Left cardiac atrium (tissue), 4 donors: ENCODE measurements at regions of chr1 and their contacts with region 1.

Region 1: DNA sequence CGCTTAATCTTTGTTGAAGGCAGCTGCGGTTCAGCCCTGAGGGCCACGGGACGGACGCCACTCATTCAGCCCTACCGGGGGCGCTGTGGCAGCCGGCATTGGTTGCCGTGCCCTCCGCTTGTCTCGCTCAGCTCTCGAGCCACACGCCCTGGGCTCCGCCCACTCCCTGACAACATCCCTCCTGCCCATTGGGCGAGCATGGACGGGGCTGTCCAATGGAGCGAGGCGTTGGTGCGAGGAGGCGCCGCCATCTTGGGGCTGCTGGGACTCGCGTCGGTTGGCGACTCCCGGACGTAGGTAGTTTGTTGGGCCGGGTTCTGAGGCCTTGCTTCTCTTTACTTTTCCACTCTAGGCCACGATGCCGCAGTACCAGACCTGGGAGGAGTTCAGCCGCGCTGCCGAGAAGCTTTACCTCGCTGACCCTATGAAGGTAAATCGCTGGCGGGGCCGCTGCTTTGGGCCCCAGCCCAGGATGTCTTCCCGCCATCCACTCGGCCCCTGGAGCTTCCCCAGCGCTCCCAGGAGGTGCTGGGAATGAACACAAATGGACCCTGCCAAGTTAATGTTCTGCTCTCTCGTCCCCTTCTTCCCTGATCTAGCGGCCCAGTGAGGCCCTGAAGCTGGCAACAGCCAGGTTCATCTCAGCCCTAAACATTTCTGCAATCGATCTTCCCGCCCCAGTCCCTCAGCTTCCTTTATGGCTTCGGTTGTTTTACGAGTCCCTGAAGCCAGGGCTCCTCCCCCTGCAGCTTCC is at the start of gene SRP9:
- DNase-seq: peak; percentile 99
- ATAC-seq: peak; percentile 100
- total RNA-seq, gene SRP9: 189 to 200 TPM

Region 2: DNA sequence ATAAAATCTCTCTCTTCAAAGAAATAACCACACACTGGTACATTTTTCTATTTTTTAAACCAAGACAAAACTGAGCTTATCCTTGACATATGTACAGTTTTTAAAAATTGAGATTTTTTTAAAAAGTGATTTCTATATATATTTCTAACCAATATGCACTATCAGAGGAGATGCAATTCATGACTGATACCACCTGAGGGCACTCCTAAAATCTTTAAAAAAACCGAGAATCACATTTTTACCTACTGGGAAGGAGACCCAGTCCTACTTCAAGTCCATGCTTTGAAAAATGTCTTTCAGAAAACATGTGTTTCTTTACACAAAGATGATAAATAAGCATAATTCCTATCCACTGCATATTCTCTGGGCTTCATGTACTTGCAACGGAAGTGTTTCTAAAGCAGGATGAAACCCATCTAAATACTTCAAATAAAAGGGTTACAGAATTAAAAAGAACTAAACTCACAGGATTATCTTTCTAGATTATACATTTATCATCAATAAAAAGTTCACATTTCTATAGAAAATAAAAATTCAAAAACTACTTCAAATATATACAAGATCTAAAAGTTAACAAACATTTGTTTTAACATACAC is 223.4 kb before region 1 on chr1:
- intact Hi-C with region 1: loop called (anchors 5 to 10 kb)
- DNase-seq: no peak
- ATAC-seq: peak; percentile 44 to 47

Region 3: DNA sequence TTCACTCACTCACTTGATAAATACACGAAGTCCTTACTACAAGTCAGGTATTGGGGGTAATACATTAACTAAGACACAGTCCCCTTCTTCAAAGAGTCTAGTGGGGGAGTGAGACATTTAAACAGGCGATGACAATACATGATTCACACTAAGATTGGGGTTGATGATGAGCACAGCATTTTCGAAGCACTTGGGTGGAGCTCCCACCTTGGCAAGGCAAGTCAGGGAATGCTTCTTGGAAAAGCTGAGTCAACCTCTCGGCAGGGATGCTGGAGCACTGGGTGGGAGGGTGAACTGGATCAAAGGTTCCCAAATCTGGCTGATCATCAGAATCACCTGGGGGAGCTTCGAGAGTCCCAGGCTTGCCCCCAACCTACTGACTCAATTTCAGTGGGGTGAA is 67.0 kb before region 1 on chr1:
- intact Hi-C with region 1: no loop called
- DNase-seq: no peak
- ATAC-seq: peak in 1 of 2 donors; percentile 89

Region 4: GRCh38 chr1:225911191-225912130 is 133.7 kb after region 1 on chr1:
- intact Hi-C with region 1: loop called in 1 of 2 experiments (anchors 5 kb)
- DNase-seq: peak; percentile 80
- ATAC-seq: peak; percentile 91 to 95

Region 5: DNA sequence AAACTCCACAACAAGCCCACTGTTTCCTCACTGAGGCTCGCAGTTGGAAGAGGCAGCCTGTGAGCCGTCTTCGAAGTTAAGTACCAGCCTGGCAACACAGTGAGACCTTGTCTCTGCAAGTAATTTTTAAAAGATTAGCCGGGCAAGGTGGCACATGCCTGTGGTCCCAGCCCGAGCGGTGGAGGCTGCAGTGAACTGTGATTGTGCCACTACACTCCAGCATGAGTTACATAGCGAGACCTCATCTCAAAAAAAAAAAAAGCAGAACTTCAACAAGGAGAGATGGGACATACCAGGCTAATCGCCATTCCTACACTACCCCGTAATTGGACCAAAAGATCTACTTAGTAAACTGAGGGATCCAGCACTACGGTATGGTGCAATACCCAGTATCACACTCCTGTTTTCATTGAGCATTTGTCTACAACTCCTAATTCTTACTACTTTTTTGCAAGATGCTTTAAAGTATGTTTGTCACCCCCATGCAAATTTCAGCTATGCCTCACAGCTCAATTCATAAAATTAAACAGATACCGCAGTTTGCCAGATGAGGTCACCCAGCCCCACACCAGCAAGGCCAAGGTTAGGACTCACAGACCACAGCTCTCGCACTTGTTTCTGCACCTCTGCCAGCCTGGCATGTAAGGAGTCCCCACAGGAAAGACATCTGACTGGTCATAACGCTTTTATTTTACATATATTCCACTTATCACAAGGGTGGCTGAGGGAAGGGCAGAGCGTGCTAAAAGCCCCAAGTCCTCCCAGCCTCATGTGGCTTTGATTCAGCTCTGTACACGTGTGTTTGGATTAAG is 200.4 kb after region 1 on chr1:
- intact Hi-C with region 1: loop called in 1 of 2 experiments (anchors 10 kb)
- DNase-seq: no peak
- ATAC-seq: no peak